Caco-2 (cell line): ENCODE measurements at regions of chr6 and their contacts with region 1.

Region 1: GRCh38 chr6:46042355-46042999 is 26.8 kb upstream of the CLIC5 start:
- DNase-seq: peak; percentile 37 to 44
- H3K4me3 ChIP-seq: no peak overlapping the region
- H3K4me3 Mint-ChIP-seq: no peak overlapping the region
- H3K27ac Mint-ChIP-seq: no peak overlapping the region
- H3K4me1 ChIP-seq: no peaks in the 10 kb centered on the region
- H3K4me1 Mint-ChIP-seq: no peaks in the 10 kb centered on the region
- H3K27me3 ChIP-seq: no peaks in the 10 kb centered on the region; the same call in 1 of the 2 replicates
- H3K27me3 Mint-ChIP-seq: no peaks in the 10 kb centered on the region
- CTCF ChIP-seq: peak; percentile 44 to 58

Region 2: GRCh38 chr6:46191961-46192360 is 149.5 kb after region 1 on chr6:
- CTCF ChIA-PET with region 1: no interaction called
- POLR2A ChIA-PET with region 1: no interaction called
- intact Hi-C with region 1: no loop called
- DNase-seq: no peak
- H3K4me3 ChIP-seq: no peak overlapping the region
- H3K4me3 Mint-ChIP-seq: no peak overlapping the region
- H3K27ac Mint-ChIP-seq: no peak overlapping the region
- H3K4me1 ChIP-seq: no peaks in the 10 kb centered on the region
- H3K4me1 Mint-ChIP-seq: no peaks in the 10 kb centered on the region
- H3K27me3 ChIP-seq: no peaks in the 10 kb centered on the region
- H3K27me3 Mint-ChIP-seq: peaks cover 2% of the 10 kb centered on the region
- CTCF ChIP-seq: no peak

Region 3: GRCh38 chr6:46410334-46410953 is 368.0 kb after region 1 on chr6:
- CTCF ChIA-PET with region 1: no interaction called
- POLR2A ChIA-PET with region 1: no interaction called
- intact Hi-C with region 1: loop called (anchors 1 kb)
- DNase-seq: peak in 1 of 2 experiments; percentile 8
- H3K4me3 ChIP-seq: no peak overlapping the region
- H3K4me3 Mint-ChIP-seq: no peak overlapping the region
- H3K27ac Mint-ChIP-seq: no peak overlapping the region
- H3K4me1 ChIP-seq: no peaks in the 10 kb centered on the region
- H3K4me1 Mint-ChIP-seq: peaks cover 4% of the 10 kb centered on the region
- H3K27me3 ChIP-seq: no peaks in the 10 kb centered on the region
- H3K27me3 Mint-ChIP-seq: peaks cover 3% of the 10 kb centered on the region
- CTCF ChIP-seq: peak; percentile 31 to 63